Activated CD4-positive, alpha-beta T cell treated with anti-CD3 and anti-CD28 coated beads, Interleukin-2, amount 10 ng/mL, durations not matched to agents 24 days and 14 days (primary cell): ENCODE measurements at regions of chr3 and their contacts with region 1.

Region 1: DNA sequence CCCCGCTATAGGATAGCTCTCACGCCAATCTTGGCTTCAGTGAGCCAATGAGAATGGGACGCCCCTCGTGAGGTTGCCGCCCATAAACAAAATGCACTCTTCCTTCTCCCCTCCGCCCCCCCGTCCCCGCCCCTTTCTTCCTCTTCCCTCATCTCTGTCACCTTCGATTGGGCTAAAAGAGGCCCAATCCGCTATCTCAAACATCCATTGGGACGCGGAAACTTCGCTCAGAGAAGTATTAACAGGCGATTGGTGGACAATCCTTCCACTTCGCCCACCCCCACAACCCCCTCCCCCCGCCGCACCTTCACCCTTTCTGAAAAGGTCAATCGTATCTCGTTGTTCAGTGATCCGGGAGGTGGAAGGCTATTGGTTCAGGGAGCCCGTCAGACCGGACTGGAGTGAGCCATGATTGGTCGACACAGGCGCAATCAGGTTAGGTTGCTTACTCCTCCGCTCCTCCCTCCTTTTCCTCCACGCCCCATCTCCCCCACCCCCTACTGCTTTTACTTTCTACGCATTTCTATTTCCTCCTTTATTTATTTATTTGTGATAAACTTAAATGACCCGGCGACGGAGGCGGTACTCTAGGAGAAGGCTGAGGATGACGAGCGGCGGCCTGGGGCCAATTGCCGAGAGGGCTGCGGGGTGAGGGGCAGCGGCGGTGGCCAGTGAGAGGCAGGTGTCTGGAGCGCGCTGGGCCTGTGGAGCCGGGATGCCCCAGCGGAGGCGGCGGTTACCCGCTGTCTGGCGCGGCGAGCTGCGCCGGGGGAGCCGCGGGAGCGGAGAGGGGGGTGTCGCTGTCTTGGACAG is 447 bp upstream of the ZBTB20 start:
- DNase-seq: peak; percentile 99
- H3K4me3 Mint-ChIP-seq: peak overlapping the region; percentile 91
- H3K27ac Mint-ChIP-seq: peak overlapping the region; percentile 98
- H3K4me1 Mint-ChIP-seq: peaks cover 16% of the 10 kb centered on the region
- H3K27me3 Mint-ChIP-seq: no peaks in the 10 kb centered on the region

Region 2: DNA sequence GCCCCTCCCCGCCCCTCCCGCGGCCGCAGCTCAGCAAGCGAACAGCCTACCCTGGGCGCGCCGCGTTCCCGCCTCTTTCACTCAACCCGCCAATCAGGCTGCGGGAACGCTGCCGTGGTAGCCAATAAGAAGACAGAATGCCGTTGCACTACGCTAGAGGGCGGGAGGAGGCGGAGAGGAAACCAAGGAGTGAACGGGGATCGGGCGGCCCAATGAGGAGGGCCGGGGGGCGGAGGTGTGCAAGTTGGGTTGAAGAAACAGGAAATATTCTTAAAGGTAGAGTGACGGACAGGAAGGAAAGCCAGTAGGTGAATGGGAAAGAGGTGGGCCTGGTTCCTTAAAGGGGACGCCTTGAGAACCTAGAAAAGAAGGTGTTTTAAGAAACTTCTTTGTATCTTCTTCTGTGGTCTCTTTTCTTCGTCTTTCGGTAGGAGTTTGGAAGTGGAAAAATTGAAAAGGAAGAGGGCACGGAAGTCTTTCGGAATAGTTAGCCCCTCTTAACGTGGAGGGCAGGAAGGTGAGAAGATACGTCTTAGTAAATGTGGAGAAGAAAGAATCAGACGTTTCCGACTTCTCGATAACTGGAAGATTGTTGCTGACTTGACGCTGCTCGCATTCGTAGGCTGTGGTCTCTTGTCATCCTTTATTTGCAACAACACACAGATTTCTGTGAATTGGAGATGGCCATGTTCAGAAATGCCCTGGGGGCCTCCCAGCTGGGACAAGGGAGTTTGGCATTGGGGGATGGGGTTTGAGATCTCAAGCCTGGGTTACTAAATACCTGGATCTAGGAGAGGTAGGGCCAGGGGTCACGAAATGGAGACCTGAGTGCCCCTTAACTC is 1450.7 kb before region 1 on chr3:
- intact Hi-C with region 1: loop called (anchors 2 kb)
- DNase-seq: peak; percentile 100
- H3K4me3 Mint-ChIP-seq: no peak overlapping the region
- H3K27ac Mint-ChIP-seq: no peak overlapping the region
- H3K4me1 Mint-ChIP-seq: peaks cover 27% of the 10 kb centered on the region
- H3K27me3 Mint-ChIP-seq: no peaks in the 10 kb centered on the region

Region 3: DNA sequence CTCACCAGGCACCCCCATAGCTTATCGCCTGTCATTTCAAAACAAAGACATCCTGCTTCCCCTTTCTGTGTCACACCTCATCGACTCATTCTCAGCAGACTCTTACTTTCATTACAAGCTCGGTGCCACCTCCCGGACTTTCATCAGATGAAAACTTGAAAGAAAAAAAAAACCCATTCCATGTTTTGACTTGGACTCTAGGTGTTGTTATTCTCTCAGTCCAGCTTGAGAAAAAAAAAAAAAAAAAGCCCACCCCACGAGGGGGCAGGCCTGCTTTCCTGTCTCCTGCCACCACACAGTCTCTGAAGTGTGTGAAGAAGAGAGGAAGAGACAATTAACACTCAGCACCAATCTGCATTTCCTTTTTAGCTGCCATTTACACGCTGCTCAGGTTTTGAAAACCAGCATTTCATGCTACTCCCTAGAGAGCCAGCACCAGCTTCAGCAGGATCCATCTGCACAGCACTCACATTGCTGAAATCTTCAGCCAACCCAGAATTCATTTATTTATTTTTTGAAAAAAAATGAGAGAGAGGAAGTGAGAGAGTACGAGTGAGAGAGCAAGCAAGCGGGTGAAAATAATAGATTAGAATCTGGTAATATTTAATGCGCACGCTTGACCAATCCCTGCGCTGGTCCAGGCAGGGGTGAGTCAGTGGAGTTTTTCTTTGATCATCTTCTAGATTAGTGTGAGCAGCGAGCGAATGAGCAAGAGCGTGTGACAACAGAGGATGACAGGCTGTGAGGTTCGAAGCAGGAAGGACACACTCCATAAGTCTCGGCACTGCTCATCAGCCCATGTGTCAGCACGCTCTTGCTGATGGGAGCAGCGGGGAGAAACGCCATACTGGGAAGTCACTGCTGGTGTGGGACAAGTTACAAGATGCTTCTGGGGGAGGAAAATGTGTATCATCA is 933.7 kb before region 1 on chr3:
- intact Hi-C with region 1: loop called (anchors 2 kb)
- DNase-seq: peak; percentile 89
- H3K4me3 Mint-ChIP-seq: no peak overlapping the region
- H3K27ac Mint-ChIP-seq: no peak overlapping the region
- H3K4me1 Mint-ChIP-seq: peaks cover 23% of the 10 kb centered on the region
- H3K27me3 Mint-ChIP-seq: no peaks in the 10 kb centered on the region

Region 4: DNA sequence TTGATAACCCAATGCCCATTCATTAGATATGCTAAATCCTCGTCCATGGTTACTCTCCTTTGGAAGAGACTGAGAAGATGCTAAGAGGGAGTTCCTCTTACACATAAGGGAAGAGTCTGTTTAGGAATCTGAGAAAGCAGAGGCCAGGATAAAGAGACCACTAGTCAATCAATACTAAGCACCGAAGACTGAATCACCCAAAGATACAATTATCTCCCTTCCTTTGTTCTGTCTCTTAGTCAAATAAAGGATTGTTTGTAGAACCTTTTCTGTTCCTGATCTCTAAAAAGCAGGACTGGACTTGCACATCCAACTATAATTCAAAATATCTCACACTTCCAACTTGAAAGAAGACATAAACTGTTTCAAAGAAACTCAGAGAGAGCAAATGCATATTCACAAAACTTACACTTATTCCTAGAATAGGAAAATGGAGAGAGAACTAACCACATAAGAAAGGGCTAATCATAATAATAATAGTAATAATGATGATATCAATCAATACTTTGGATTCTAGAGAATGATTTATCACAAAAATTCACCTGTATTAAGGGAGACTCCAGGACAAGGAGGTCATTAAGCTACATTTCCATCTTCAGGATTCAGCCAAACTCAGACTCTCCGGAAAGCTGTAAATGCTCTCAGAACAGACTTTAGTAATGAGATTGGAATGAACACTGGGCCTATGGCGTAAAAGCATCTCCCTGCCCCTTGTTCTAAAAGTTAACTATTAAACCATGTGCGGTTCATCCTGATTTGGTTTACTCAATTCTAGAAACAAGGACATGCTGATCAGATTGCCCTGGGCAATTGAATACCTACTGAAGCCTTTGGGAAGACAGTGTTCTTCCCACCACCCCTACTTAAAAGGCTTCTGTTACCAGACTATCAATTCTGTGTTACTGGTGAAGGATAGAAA is 402.0 kb before region 1 on chr3:
- intact Hi-C with region 1: no loop called
- DNase-seq: no peak
- H3K4me3 Mint-ChIP-seq: peak overlapping the region; percentile 67
- H3K27ac Mint-ChIP-seq: no peak overlapping the region
- H3K4me1 Mint-ChIP-seq: peaks cover 17% of the 10 kb centered on the region
- H3K27me3 Mint-ChIP-seq: no peaks in the 10 kb centered on the region

Region 5: DNA sequence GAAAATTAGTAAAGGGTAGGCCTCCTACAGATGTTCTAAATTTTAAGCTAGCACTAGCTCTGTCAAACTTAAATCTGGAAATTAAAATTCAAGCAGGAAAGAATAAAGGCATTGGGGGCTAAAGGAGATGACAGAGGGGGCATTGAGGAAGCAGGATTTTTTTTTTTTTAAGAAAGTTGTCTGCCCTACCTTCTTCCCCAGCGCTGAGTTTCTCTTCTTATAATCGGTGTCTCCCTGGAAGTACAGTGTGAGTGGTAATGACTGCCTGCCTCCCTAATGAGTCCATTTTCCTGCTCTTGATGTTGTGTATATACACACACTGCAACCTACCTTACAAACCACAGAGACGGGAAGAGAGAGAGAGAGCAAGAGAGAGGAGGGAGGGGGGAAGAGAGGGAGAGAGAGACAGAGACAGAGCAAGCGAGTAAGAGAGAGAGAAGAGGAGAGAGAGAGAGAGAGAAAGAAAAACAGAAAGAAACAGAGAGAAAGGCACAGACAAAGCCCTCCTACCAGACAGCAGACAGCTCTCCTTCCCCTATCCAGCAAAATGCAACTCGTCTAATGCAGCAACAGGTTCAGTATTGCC is 47.5 kb before region 1 on chr3:
- intact Hi-C with region 1: loop called (anchors 2 kb)
- DNase-seq: peak; percentile 79
- H3K4me3 Mint-ChIP-seq: peak overlapping the region; percentile 95
- H3K27ac Mint-ChIP-seq: peak overlapping the region; percentile 89
- H3K4me1 Mint-ChIP-seq: peaks cover 20% of the 10 kb centered on the region
- H3K27me3 Mint-ChIP-seq: no peaks in the 10 kb centered on the region

Region 6: GRCh38 chr3:115169808-115170207 is 22.3 kb after region 1 on chr3:
- intact Hi-C with region 1: loop called (anchors 1 kb)
- DNase-seq: no peak
- H3K4me3 Mint-ChIP-seq: no peak overlapping the region
- H3K27ac Mint-ChIP-seq: no peak overlapping the region
- H3K4me1 Mint-ChIP-seq: peaks cover 12% of the 10 kb centered on the region
- H3K27me3 Mint-ChIP-seq: peaks cover 10% of the 10 kb centered on the region

Region 7: DNA sequence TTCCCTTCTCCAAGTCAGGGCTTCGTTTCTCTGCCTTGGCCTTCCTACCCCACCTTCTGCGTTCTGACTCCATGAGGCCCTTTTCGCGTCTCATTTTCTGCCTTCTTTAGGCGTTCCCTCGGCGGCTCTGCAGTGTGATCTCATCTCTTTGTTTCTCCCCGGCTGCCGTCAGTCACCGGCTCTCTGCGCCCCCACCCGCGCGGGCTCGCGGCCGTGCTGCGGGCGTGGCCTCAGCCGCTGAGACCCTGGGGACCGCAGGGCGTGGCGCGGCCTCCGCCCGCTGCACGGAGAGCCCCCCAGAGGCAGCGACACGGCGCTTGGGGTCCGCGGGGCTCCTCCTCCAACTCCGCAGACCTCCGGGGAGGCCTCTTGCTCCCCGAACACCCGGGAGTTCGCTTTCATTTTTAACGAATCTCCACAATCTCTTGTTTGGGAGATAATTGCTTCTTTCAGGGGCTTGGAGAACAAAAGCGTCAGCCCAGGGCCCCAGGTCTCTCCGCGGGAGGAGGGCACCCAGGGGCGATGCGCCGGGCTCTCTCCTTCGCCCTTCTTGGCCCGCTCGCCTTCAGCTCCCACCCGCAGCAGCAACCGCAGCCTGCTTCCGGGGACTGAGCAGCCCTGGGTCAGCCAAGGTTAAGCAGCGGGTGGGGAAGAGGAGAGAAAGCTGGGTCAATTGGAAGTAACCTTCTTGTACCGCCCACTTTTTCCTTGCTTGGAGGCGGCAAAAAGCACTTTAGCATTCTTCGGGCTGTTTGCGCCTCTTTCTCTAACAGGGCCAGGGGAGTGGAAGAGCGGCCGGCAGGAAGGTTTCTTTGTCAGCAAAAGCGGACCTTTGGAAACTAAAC is 511.0 kb after region 1 on chr3:
- intact Hi-C with region 1: loop called (anchors 1 kb)
- DNase-seq: peak; percentile 91
- H3K4me3 Mint-ChIP-seq: peak overlapping the region; percentile 98
- H3K27ac Mint-ChIP-seq: peak overlapping the region; percentile 99
- H3K4me1 Mint-ChIP-seq: peaks cover 23% of the 10 kb centered on the region
- H3K27me3 Mint-ChIP-seq: peaks cover 7% of the 10 kb centered on the region

Region 8: GRCh38 chr3:115783938-115784738 is 636.6 kb after region 1 on chr3:
- intact Hi-C with region 1: loop called (anchors 1 kb)
- DNase-seq: peak; percentile 95
- H3K4me3 Mint-ChIP-seq: peak overlapping the region; percentile 86
- H3K27ac Mint-ChIP-seq: peak overlapping the region; percentile 98
- H3K4me1 Mint-ChIP-seq: peaks cover 15% of the 10 kb centered on the region
- H3K27me3 Mint-ChIP-seq: peaks cover 9% of the 10 kb centered on the region